ENCODE measurements at regions of chr11 and their contacts with region 1.

Region 1: DNA sequence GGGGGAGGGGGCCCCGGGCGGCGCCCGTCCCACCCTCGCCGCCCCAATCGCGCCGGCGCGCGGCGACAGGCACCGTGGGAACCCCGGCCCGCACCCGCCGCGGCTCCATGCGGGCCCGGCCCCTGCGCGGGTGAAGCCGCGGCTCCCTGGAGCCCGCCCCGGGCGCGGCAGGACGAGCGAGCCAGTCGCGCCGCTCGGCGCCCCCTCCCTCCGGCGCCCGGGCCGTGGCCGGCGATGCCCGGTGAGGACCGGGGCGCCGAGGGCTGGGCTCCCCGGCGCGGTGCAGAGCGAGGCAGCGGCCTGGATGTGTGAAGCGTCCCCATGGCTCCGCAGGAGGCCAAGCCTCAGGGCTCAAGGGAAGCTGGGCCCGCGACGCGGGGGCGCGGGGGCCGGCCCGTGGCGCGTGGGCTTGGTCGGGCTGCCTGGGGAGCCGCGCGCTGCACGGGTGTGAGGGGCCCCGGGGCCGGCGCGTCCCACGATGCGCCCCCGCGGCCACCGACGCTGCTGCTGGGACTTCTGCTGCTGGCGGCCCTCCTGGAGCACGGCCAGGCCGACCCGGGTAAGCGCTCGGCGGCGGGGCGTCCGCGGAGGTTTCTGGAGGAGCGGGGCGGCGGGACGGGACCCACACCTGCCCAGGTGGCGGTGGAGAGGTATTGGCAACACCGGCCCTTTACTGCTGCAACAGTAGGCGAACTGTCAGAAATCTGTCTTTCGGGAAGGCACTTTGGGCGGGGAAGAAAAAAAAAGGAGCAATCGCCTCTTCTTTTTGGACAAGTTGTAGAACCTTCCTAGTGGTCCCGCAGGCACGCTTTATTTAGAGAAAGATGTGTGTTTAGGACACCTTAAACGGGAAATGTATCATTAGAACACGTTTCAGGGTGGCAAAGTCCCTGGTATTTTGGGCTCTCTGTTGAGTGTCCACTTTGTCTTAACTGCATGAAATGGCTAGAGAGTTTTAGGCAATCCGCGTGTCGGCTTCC is 119.4 kb downstream of the HIPK3 start:
- DNase-seq: peak; percentile 67
- H3K4me3 ChIP-seq: peak overlapping the region; percentile 82
- H3K27ac ChIP-seq: peak overlapping the region; percentile 33
- H3K4me1 ChIP-seq: peaks cover 34% of the 10 kb centered on the region
- H3K27me3 ChIP-seq: no peaks in the 10 kb centered on the region

Region 2: DNA sequence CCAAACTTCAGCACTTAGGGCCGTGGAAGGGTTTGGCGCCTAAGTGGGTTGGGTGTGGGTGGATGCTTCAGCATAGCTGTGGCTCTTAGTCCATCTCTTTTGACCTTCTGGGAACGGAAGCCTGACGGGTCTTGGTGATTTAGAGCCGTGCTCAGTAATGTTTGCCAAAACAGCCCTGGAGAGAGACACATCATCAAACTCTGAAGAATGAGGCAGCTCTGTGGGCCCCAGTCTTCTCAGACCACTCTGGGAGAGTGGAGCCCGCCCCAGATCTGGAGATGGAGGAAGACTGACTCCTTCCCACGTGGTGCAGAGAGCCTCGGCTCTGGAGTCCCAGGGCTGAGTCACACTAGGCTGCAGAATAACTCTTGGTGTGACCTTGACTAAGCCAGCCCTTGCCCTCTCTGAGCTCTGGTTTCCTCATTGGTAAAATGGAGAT is 155.1 kb after region 1 on chr11:
- in situ Hi-C with region 1: loop called (anchors 10 kb)
- DNase-seq: peak; percentile 99
- H3K4me3 ChIP-seq: peak overlapping the region; percentile 24; the same call in 1 of the 2 replicates
- H3K27ac ChIP-seq: peak overlapping the region; percentile 87
- H3K4me1 ChIP-seq: peaks cover 42% of the 10 kb centered on the region
- H3K27me3 ChIP-seq: no peaks in the 10 kb centered on the region